Caco-2 (cell line): ENCODE measurements at regions of chr11 and their contacts with region 1.

Region 1: DNA sequence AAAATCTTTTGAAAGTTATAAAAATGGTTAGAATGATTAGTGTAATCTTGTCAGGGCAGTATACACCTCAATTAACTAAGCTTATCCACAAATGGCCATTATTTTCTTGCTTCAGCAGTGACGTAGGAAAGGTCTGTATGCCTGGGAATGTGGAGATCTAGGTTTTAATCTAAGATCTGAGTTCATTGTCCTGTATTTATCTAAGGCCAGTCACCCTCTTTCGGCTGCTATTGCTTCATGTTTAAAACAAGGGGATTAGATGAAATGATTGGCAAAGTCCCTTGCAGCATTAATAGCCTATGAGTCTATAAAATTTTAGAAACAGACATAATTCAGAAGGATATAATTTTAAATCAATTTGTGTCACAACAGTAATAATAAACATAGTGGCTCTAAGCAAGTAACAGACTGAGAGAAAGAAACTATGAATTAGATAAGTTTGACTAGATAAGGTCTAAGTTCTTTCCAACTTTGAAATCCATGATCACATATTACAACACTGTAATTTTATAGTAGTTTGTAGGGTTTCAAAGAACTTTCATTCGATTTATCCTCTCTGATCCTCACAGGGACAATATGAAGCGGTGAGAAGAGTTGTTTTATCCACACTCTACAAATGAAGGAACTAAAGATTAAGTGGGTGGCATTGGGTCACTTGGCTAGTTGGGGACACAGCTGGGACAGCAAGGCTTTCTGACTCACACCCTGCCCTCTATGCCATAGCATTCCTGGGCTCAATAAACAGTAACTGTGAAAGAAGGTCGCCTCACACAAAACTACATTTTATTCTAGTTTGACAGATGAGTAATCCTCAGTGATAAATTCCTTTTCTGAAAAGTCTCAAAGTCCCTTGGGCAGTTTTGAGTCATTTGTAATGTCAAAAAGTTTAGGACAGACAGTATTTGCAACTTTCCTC is 60.6 kb upstream of the RDX start:
- DNase-seq: peak; percentile 77 to 86
- H3K4me3 ChIP-seq: no peak overlapping the region
- H3K4me3 Mint-ChIP-seq: peak overlapping the region; percentile 29
- H3K27ac Mint-ChIP-seq: peak overlapping the region; percentile 73
- H3K4me1 ChIP-seq: peaks cover 38% of the 10 kb centered on the region
- H3K4me1 Mint-ChIP-seq: peaks cover 43% of the 10 kb centered on the region
- H3K27me3 ChIP-seq: no peaks in the 10 kb centered on the region
- H3K27me3 Mint-ChIP-seq: no peaks in the 10 kb centered on the region
- CTCF ChIP-seq: no peak

Region 2: GRCh38 chr11:110311783-110312579 is 45.0 kb before region 1 on chr11:
- CTCF ChIA-PET with region 1: no interaction called
- POLR2A ChIA-PET with region 1: no interaction called
- intact Hi-C with region 1: loop called (anchors 1 kb)
- DNase-seq: no peak
- H3K4me3 ChIP-seq: no peak overlapping the region
- H3K4me3 Mint-ChIP-seq: no peak overlapping the region
- H3K27ac Mint-ChIP-seq: peak overlapping the region; percentile 63
- H3K4me1 ChIP-seq: peaks cover 23% of the 10 kb centered on the region
- H3K4me1 Mint-ChIP-seq: peaks cover 19% of the 10 kb centered on the region
- H3K27me3 ChIP-seq: no peaks in the 10 kb centered on the region; the same call in 1 of the 2 replicates
- H3K27me3 Mint-ChIP-seq: peaks cover 5% of the 10 kb centered on the region
- CTCF ChIP-seq: no peak

Region 3: GRCh38 chr11:110327508-110327907 is 29.5 kb before region 1 on chr11:
- CTCF ChIA-PET with region 1: no interaction called
- POLR2A ChIA-PET with region 1: no interaction called
- intact Hi-C with region 1: no loop called
- DNase-seq: no peak
- H3K4me3 ChIP-seq: no peak overlapping the region
- H3K4me3 Mint-ChIP-seq: no peak overlapping the region
- H3K27ac Mint-ChIP-seq: no peak overlapping the region
- H3K4me1 ChIP-seq: peaks cover 7% of the 10 kb centered on the region; the same call in 1 of the 2 replicates
- H3K4me1 Mint-ChIP-seq: peaks cover 13% of the 10 kb centered on the region
- H3K27me3 ChIP-seq: no peaks in the 10 kb centered on the region
- H3K27me3 Mint-ChIP-seq: no peaks in the 10 kb centered on the region
- CTCF ChIP-seq: no peak

Region 4: GRCh38 chr11:110337570-110338193 is 19.3 kb before region 1 on chr11:
- CTCF ChIA-PET with region 1: no interaction called
- POLR2A ChIA-PET with region 1: no interaction called
- intact Hi-C with region 1: loop called (anchors 1 kb)
- DNase-seq: peak; percentile 93 to 94
- H3K4me3 ChIP-seq: no peak overlapping the region
- H3K4me3 Mint-ChIP-seq: peak overlapping the region; percentile 29
- H3K27ac Mint-ChIP-seq: peak overlapping the region; percentile 95
- H3K4me1 ChIP-seq: peaks cover 35% of the 10 kb centered on the region
- H3K4me1 Mint-ChIP-seq: peaks cover 27% of the 10 kb centered on the region
- H3K27me3 ChIP-seq: no peaks in the 10 kb centered on the region
- H3K27me3 Mint-ChIP-seq: no peaks in the 10 kb centered on the region
- CTCF ChIP-seq: no peak